BJ (cell line): ENCODE measurements at regions of chr17 and their contacts with region 1.

Region 1: GRCh38 chr17:43827590-43827989 is 5.4 kb downstream of the MPP3 start:
- DNase-seq: no peak
- H3K4me3 ChIP-seq: no peak overlapping the region
- H3K27me3 ChIP-seq: no peaks in the 10 kb centered on the region
- CTCF ChIP-seq: no peak

Region 2: DNA sequence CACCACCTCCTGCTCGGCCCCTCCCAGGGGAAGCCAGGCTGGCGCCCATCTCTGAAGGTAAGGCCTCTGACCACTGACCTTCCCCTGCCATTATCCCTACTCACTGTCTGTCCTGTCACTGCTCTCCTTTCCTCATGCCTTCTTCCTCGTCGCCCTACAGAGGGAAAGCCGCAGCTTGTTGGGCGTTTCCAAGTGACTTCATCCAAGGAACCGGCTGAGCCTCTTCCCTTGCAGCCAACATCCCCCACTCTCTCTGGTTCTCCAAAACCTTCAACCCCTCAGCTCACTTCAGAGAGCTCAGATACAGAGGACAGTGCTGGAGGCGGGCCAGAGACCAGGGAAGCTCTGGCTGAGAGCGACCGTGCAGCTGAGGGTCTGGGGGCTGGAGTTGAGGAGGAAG is 1032.1 kb before region 1 on chr17:
- CTCF ChIA-PET with region 1: no interaction called
- POLR2A ChIA-PET with region 1: interaction called, 21 read pairs
- DNase-seq: no peak
- H3K4me3 ChIP-seq: no peak overlapping the region
- H3K27me3 ChIP-seq: no peaks in the 10 kb centered on the region
- CTCF ChIP-seq: no peak

Region 3: GRCh38 chr17:43745541-43745940 is 82.0 kb before region 1 on chr17:
- CTCF ChIA-PET with region 1: no interaction called
- POLR2A ChIA-PET with region 1: no interaction called
- DNase-seq: no peak
- H3K4me3 ChIP-seq: no peak overlapping the region
- H3K27me3 ChIP-seq: no peaks in the 10 kb centered on the region
- CTCF ChIP-seq: no peak

Region 4: GRCh38 chr17:43814714-43815113 is 12.9 kb before region 1 on chr17:
- CTCF ChIA-PET with region 1: interaction called, 21 read pairs
- POLR2A ChIA-PET with region 1: no interaction called
- DNase-seq: peak; percentile 53
- H3K4me3 ChIP-seq: no peak overlapping the region
- H3K27me3 ChIP-seq: no peaks in the 10 kb centered on the region
- CTCF ChIP-seq: no peak

Region 5: GRCh38 chr17:43871951-43872695 is 44.5 kb after region 1 on chr17:
- CTCF ChIA-PET with region 1: no interaction called
- POLR2A ChIA-PET with region 1: no interaction called
- DNase-seq: no peak
- H3K4me3 ChIP-seq: no peak overlapping the region
- H3K27me3 ChIP-seq: peaks cover 9% of the 10 kb centered on the region
- CTCF ChIP-seq: no peak

Region 6: GRCh38 chr17:44061446-44061845 is 233.9 kb after region 1 on chr17:
- CTCF ChIA-PET with region 1: no interaction called
- POLR2A ChIA-PET with region 1: no interaction called
- DNase-seq: peak; percentile 65
- H3K4me3 ChIP-seq: no peak overlapping the region
- H3K27me3 ChIP-seq: no peaks in the 10 kb centered on the region
- CTCF ChIP-seq: no peak